ENCODE measurements at regions of chr1 and their contacts with region 1.

Region 1: DNA sequence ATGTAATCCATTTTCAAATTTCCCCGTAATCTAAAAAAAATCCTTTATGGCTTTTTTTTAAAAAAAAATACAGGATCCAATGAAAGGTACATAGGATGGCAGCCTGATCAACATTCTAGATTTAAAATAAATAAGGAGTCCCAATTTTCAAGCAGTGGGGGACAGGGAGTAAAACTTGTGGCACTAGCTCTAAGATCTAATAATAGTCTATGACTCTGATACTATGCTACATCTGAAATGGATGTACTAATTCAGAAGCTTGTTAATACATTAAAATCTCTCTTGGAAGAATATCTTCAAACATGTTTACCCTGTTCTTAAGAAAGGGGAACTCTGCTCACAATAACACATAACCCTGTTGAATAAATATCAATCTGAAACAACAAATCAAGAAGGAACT is 8.5 kb downstream of the DIPK1A start:
- DNase-seq: no peak
- ATAC-seq: no peak
- H3K4me3 ChIP-seq: no peak overlapping the region
- H3K27ac ChIP-seq: no peak overlapping the region
- H3K4me1 ChIP-seq: peaks cover 18% of the 10 kb centered on the region
- H3K27me3 ChIP-seq: no peaks in the 10 kb centered on the region
- CTCF ChIP-seq: no peak

Region 2: DNA sequence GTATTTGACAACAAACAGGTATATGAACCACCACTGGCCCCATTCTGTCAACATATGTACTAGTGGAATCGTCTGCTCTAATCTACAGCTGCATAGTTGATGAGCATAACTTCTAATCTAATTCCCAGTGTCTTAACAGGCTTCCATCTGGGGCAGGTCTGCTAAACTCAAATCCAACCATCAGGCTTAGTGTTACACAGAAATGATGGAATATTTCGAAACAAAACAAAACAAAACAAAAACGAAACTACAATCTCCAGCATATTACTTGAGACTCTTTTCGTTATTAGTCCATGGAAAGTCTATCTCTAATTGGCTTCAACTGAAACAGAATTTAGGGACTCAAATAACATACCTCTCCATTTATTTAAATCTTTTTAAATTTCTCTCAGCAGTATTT is 29.1 kb before region 1 on chr1:
- CTCF ChIA-PET with region 1: interaction called, 3 read pairs
- POLR2A ChIA-PET with region 1: no interaction called
- intact Hi-C with region 1: loop called (anchors 1 kb)
- DNase-seq: no peak
- ATAC-seq: no peak
- H3K4me3 ChIP-seq: no peak overlapping the region
- H3K27ac ChIP-seq: no peak overlapping the region
- H3K4me1 ChIP-seq: no peaks in the 10 kb centered on the region
- H3K27me3 ChIP-seq: no peaks in the 10 kb centered on the region
- CTCF ChIP-seq: no peak